CD14-positive monocyte (primary cell): ENCODE measurements at regions of chr4 and their contacts with region 1.

Region 1: DNA sequence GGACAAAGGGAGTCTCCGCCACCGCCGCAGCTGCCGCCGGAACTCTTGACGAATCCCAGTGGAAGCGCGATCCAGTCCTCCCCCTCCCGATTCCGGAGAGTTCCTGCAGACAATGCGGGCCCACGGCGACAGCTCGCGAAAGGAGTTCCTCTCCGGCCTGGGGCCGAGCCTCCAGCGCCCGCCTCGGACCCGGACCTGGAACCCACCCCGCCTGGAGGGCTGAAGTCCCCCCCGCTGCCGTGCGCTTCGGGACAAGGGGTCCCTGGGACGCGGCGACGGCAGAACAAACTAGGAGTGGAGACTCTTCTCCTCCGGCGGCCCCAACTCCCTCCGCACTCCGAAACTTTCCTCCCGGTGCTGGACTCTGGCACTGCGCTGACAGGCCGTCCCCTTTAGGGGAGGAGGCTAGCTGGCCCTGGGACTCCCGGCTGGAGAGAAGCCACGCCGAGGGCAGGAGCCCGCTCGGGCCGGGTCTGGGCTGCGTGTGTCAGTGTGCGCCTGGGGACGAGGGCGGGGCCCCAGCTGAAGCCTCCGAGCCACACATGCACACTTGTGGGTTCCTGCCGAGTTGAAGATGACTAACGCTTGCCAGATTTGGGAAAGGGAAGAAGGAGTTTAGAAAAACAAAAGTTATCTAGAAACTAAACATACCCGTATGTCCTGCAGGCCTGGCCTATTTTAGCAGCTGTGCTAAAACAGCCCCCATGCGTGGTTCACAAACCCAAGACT is at the start of gene ANTXR2:
- DNase-seq: peak; percentile 92 to 94 (median 94)
- H3K4me3 ChIP-seq: peak within 1 kb of the TSS; percentile 61 to 93 (median 81)
- H3K4me3 Mint-ChIP-seq: peak within 1 kb of the TSS; percentile 98 to 100
- H3K27ac ChIP-seq: peak within 1 kb of the TSS; percentile 98 to 99
- H3K27ac Mint-ChIP-seq: peak within 1 kb of the TSS; percentile 98 to 100 (median 99)
- H3K4me1 ChIP-seq: peaks cover 65 to 69% of the 10 kb centered on the region in 2 donors
- H3K4me1 Mint-ChIP-seq: peaks cover 72% of the 10 kb centered on the region
- H3K27me3 ChIP-seq: no peaks in the 10 kb centered on the region
- H3K27me3 Mint-ChIP-seq: no peaks in the 10 kb centered on the region
- CTCF ChIP-seq: no peak
- polyA plus RNA-seq, gene ANTXR2: 15.4 to 69.6 (median 59.2) TPM

Region 2: DNA sequence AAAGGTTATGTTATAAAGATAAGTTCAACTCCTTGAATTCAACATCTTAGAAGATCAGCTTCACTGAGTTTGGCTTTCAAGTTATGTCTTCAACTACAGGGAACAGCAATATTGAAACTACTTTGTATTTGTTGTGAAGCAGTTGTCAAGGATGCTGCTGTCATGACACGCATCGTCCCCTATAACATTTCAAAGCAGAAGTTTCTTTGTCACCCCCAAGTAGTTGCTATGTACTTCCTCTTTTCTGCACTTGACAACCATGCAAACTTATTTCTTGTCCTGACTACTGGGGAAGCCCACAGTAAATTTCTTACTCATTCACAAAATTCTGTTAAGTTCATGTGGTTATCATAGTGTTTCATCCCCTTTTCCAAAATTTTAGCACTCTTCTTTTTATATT is 14.2 kb before region 1 on chr4:
- intact Hi-C with region 1: loop called in 1 of 2 experiments (anchors 2 kb)
- DNase-seq: peak; percentile 94 to 98 (median 98)
- H3K4me3 ChIP-seq: peak overlapping the region in 2 of 3 experiments; percentile 35 to 38
- H3K4me3 Mint-ChIP-seq: peak overlapping the region; percentile 76 to 85
- H3K27ac ChIP-seq: peak overlapping the region; percentile 34 to 96
- H3K27ac Mint-ChIP-seq: peak overlapping the region; percentile 97 to 99 (median 98)
- H3K4me1 ChIP-seq: peaks cover 14 to 16% of the 10 kb centered on the region in 2 donors
- H3K4me1 Mint-ChIP-seq: peaks cover 24% of the 10 kb centered on the region
- H3K27me3 ChIP-seq: no peaks in the 10 kb centered on the region
- H3K27me3 Mint-ChIP-seq: no peaks in the 10 kb centered on the region
- CTCF ChIP-seq: no peak

Region 3: DNA sequence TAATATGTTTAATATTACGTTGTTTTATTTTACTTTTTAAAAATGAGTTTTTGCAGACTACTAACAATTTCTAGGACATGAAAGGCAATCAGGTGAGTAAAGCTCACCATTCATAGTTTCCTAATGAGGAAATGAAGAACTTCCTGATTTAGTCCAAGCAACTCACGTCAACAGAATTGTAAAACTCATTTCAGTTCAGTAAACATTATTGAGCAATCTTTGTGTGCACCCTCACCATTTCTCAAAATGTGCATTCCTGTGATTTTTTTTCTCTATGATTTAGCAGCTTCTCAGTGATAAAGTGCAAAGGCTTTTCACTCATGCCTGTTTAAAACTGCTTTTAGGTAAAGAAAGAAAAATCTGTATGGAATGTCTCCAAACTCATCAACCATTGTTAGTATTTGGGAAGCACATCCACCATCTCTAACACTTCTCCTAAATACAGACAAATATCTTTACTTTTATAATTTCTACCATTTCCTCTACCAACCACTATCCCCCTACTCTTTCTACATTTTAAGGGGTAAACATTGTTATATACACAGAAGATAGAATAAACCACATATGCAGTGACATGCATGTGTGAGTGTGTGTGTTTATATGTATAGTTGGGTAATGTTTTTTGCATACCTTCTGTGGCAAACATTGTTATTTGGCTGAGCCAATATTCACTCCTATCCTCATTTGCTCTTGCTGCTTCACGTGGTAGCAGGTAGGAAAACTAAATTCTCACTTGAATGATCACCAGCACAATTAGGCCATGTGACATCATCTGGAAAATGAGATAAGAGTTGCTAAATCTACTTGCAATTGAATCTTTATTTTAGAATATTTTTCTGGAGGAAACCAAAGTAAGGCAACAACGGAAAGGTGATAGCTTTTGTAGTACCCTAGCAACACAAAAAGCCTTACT is 69.7 kb after region 1 on chr4:
- intact Hi-C with region 1: loop called (anchors 5 kb)
- DNase-seq: peak; percentile 65 to 94 (median 89)
- H3K4me3 ChIP-seq: no peak overlapping the region
- H3K4me3 Mint-ChIP-seq: no peak overlapping the region
- H3K27ac ChIP-seq: peak overlapping the region in 1 of 2 donors; percentile 68
- H3K27ac Mint-ChIP-seq: peak overlapping the region; percentile 75 to 95 (median 88)
- H3K4me1 ChIP-seq: peaks cover 48 to 57% of the 10 kb centered on the region in 2 donors
- H3K4me1 Mint-ChIP-seq: peaks cover 59% of the 10 kb centered on the region
- H3K27me3 ChIP-seq: no peaks in the 10 kb centered on the region
- H3K27me3 Mint-ChIP-seq: peaks cover 0 to 3% (median 0%) of the 10 kb centered on the region in 3 donors
- CTCF ChIP-seq: no peak